Mucosa of descending colon (tissue), 3 donors: ENCODE measurements at regions of chr4 and their contacts with region 1.

Region 1: DNA sequence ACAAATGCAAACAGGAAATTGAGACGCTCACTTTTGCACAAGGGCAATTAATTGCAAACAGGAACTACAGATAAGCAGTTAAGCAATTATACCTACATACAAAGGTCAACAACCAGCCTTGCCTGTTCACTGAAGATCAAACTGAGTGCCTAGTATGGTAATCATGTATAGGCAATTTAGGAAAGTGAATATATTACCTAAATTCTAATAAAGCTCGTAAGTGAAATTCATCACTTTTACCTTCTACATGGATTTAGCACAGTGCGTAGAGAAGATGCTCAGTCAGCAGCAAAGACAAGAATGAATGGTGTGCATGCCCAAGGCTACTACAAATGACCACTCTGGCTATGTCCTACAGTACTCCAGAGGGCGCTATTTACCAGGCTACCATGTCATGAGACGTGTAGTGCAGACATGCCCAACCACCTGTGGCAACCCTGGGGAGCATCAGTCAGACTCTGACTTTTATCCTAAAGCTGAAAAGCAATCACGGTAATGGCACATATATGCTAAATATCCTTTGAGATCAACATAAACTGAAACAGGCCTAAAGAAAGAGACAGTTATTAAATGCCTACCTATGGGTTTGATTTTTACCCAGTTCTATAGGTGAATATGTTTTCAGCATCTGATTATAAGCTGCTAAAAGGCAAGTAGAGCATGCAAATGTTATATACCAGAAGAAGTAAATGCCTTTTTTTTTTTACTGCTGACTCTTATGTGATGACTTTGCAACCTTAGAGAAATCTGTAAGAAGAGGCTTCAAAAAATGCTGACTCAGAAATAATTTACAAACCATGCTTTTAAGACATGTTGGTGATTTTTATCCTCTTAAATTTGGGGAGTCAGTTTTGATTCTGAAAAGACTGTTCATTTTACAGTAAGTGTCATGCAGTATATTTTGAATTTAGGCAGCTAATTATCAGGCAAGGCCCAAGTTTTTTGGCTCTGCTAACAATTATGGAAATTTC is 178.0 kb downstream of the PPP3CA start:
- DNase-seq: peak in 2 of 3 donors; percentile 33 to 87
- ATAC-seq: peak; percentile 100
- H3K4me3 ChIP-seq: no peak overlapping the region
- H3K4me1 ChIP-seq: no peaks in the 10 kb centered on the region
- CTCF ChIP-seq: peak; percentile 68

Region 2: DNA sequence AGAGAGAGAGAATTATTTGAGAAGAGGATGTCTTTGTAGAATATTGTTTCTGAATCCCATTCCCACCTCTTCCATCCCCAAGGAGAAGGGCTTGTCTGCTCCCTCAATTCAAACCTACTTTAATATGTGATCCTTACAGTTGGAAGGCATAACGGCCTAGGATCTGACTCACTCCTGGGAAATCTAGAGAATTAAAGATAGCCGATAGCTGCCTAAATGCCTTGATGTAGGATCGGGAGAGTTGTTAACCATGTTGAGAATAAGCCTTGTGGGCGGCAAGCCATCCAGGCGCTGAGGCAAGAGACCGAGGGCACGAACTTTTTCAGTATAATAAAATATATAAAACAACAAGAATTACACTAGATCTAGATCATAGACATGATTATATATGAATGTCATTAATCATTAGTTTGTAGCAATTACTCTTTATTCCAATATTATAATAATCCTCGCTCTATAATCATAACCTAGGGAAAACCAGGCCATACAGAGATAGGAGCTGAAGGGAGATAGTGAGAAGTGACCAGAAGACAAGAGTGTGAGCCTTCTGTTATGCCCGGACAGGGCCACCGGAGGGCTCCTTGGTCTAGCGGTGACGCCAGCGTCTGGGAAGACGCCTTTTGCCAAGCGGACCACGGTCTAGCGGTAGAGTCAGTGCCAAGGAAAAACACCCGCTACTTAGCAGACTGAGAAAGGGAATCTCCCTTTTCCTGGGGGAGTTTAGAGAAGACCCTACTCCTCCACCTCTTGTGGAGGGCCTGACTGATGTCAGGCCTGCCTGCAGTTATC is 665.0 kb before region 1 on chr4:
- intact Hi-C with region 1: no loop called
- DNase-seq: no peak
- ATAC-seq: no peak
- H3K4me3 ChIP-seq: no peak overlapping the region
- H3K4me1 ChIP-seq: no peaks in the 10 kb centered on the region
- CTCF ChIP-seq: no peak

Region 3: GRCh38 chr4:101730291-101731117 is 561.2 kb after region 1 on chr4:
- intact Hi-C with region 1: loop called in 1 of 2 experiments (anchors 10 kb)
- DNase-seq: peak in 2 of 3 donors; percentile 52 to 87
- ATAC-seq: peak; percentile 97
- H3K4me3 ChIP-seq: no peak overlapping the region
- H3K4me1 ChIP-seq: no peaks in the 10 kb centered on the region
- CTCF ChIP-seq: peak; percentile 27